Endothelial cell of umbilical vein (primary cell): ENCODE measurements at regions of chrX and their contacts with region 1.

Region 1: DNA sequence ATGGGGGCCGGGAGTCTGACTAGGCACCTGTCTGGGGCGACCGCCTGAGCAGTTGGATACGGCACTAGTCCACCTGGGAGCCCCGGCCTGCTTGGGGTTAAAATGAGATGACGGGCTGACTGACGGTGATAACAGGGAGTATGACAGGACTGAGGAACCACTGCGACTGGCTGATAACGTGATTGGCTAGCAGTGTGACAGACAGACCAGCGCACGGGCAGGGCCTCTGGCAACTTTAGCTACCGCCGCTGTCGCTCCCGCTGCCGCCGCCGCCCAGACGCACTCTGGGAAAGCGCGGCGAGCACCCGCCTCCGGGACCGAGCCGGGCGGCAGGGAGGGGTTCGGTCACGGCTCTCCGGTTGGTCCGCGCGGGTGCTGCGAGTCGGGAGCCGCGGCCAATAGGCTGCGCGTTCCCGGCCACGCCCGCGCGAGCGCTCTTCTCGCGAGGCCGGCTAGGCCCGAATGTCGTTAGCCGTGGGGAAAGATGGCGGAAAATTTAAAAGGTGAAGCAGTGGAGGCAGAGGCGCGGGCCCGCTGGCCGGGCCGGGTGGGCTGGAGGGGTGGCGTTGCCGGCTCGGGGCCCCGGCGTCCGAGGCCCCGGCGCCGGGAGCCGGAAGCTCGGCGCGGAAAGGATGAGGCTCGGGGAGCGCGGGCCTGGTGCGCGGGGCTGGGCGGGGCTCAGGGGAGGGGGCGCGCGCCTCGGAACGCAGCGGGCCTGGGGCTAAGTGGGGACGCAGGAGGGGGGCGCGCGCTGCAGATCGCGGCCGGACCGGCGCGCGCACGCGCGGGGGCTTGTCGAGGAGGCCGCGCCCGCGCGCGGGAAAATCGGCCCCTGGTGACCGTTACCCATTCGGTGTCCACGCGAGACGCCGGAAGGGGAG is at the start of gene SUV39H1:
- DNase-seq: peak; percentile 87
- H3K4me3 ChIP-seq: peak within 1 kb of the TSS; percentile 60 to 76 (median 72)
- H3K27ac ChIP-seq: peak within 1 kb of the TSS; percentile 57
- H3K4me1 ChIP-seq: peaks cover 5% of the 10 kb centered on the region
- H3K27me3 ChIP-seq: no peaks in the 10 kb centered on the region
- CTCF ChIP-seq: no peak
- POLR2A ChIP-seq: peak; percentile 80
- total RNA-seq, gene SUV39H1: 18.2 and 20.0 TPM in 2 replicates

Region 2: GRCh38 chrX:48665991-48666390 is 30.6 kb before region 1 on chrX:
- CTCF ChIA-PET with region 1: no interaction called
- POLR2A ChIA-PET with region 1: no interaction called
- dilution Hi-C with region 1: no loop called
- intact Hi-C with region 1: no loop called
- DNase-seq: no peak
- H3K4me3 ChIP-seq: no peak overlapping the region
- H3K27ac ChIP-seq: no peak overlapping the region
- H3K4me1 ChIP-seq: no peaks in the 10 kb centered on the region
- H3K27me3 ChIP-seq: no peaks in the 10 kb centered on the region
- CTCF ChIP-seq: no peak
- POLR2A ChIP-seq: no peak

Region 3: DNA sequence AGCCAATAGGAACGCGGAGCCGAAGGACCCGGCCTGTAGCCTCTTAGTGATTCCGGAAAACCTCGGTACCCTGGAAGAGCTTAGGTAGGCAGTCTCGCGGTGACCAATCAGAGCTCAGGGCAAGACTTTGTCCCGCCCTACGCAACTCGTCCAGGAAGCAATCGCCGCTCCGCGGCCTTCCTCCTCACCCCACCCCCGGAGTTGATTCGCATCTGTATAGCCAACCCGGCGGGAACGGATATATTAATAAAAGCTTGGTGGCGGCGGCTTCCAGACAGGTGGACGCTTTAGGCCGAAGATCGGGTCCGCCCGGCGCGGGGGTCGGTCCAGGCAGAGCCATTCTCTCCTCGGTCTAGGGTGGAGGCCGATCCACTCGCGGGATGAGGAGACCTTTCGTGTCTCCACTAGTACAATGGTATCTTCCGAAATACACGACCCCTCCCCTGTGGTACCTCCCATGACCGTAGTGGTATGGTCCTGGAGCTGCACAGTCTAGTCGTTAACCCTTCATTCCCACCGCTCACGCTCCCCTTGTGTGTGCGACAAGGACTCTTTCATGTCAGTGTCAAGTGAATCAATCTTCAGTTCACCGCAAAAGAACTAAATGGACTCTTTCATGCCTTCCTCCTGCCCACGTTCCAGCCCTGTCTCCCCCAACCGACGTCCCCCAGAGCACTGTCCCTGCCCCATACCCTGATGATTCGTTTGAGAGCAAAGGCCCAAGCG is 40.8 kb after region 1 on chrX:
- CTCF ChIA-PET with region 1: no interaction called
- POLR2A ChIA-PET with region 1: no interaction called
- dilution Hi-C with region 1: no loop called
- intact Hi-C with region 1: loop called (anchors 1 kb)
- DNase-seq: peak; percentile 95
- H3K4me3 ChIP-seq: peak overlapping the region; percentile 11 to 58 (median 45)
- H3K27ac ChIP-seq: peak overlapping the region; percentile 64
- H3K4me1 ChIP-seq: peaks cover 3% of the 10 kb centered on the region
- H3K27me3 ChIP-seq: no peaks in the 10 kb centered on the region
- CTCF ChIP-seq: no peak
- POLR2A ChIP-seq: peak; percentile 75

Region 4: GRCh38 chrX:49155900-49156837 is 459.6 kb after region 1 on chrX:
- CTCF ChIA-PET with region 1: no interaction called
- POLR2A ChIA-PET with region 1: no interaction called
- dilution Hi-C with region 1: no loop called
- intact Hi-C with region 1: no loop called
- DNase-seq: peak; percentile 81
- H3K4me3 ChIP-seq: peak overlapping the region; percentile 14 to 59 (median 48)
- H3K27ac ChIP-seq: peak overlapping the region; percentile 96
- H3K4me1 ChIP-seq: peaks cover 2% of the 10 kb centered on the region
- H3K27me3 ChIP-seq: no peaks in the 10 kb centered on the region
- CTCF ChIP-seq: peak; percentile 53 to 75
- POLR2A ChIP-seq: no peak